Adrenal gland (tissue), 19 donors: ENCODE measurements at regions of chr12 and their contacts with region 1.

Region 1: DNA sequence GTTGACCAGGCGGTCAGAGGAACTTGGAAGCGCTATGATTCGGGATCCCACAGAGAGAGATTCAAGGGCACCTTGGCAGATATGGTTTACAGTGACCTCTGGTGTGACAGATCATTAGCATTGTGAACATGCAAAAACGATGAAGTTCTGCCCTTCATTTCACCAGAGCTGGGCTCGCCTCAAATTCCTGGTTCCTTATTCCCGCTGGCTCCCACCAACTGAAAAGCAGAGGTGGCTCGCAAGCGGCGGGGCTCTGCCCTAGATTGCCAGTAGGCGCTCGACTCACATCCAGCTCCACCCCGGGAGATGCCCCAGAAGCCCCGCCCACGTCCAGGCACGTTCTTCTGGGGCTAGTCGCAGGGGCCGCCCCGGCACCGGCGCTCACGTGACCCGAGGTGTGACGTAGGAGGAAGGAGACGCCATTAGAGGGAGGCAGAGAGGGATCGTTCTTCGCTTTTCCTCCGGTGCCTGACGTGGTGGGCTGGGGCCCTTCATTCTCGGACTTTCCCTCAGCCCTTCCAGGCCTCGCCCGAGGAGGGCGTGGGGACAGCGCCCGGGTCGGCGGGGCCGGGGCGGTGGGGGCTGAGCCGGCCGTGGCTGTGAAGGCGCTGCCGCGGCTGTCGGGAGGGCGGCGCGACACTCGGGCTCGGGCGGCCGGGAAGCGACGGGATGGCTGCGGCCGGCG is at the start of gene RAB21:
- DNase-seq: peak; percentile 98 to 100 (median 99)
- H3K4me3 ChIP-seq: peak within 1 kb of the TSS; percentile 39 to 90 (median 64)
- H3K27ac ChIP-seq: peak within 1 kb of the TSS; percentile 90 to 99 (median 97)
- H3K4me1 ChIP-seq: peaks cover 10 to 19% of the 10 kb centered on the region in 2 donors
- H3K27me3 ChIP-seq: peaks cover 5% of the 10 kb centered on the region
- CTCF ChIP-seq: peak in 5 of 6 experiments; percentile 40 to 64 (median 44)
- POLR2A ChIP-seq: peak; percentile 70 to 89
- total RNA-seq, gene RAB21: 8.6 to 123 (median 68.1) TPM

Region 2: DNA sequence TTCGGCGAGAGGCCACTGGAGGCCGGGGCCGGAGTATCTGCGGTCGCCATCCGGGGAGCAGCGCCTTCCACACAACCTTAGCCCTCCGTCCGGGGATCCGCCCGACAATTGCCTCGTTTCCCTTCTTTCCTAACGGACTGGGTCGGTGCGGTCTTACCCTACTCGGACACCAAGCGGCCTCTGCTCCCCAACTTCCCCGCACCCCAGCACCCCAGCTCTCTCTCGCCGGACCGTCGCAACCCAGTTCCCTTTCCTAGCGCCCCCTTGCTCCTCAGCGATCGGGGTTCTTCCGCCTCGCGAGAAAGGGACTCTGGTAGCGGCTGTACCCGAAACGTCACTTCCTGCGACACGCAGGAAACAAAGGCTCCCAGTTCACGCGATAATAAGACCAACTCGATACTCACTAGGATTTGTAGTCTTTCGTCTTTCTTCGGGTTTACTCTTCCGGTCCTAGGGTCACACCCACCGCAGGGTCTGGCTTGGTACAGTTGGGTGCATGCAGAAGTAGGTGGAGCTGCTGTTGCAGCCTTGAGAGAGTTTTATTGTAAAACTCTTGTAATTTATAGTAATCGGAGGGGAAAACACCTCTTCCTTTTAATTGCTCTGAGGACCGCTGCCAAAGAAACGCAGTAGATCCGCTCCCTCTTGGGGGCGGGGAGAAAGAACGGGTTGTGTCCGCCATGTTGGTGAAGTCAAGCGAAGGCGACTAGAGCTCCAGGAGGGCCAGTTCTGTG is 90.9 kb before region 1 on chr12 and contains the start of gene ZFC3H1:
- intact Hi-C with region 1: loop called in 1 of 2 experiments (anchors 10 kb)
- DNase-seq: peak; percentile 95 to 99 (median 97)
- H3K4me3 ChIP-seq: peak within 1 kb of the TSS; percentile 65 to 84 (median 82)
- H3K27ac ChIP-seq: peak within 1 kb of the TSS; percentile 94 to 100 (median 98)
- H3K4me1 ChIP-seq: peaks cover 11 to 35% of the 10 kb centered on the region in 2 donors
- H3K27me3 ChIP-seq: no peaks in the 10 kb centered on the region
- CTCF ChIP-seq: peak in 2 of 6 experiments; percentile 7 to 25
- POLR2A ChIP-seq: peak; percentile 95 to 99
- total RNA-seq, gene ZFC3H1: 11.8 to 56.2 (median 34.3) TPM